Dorsolateral prefrontal cortex (tissue), 120 donors: ENCODE measurements at regions of chr13 and their contacts with region 1.

Region 1: DNA sequence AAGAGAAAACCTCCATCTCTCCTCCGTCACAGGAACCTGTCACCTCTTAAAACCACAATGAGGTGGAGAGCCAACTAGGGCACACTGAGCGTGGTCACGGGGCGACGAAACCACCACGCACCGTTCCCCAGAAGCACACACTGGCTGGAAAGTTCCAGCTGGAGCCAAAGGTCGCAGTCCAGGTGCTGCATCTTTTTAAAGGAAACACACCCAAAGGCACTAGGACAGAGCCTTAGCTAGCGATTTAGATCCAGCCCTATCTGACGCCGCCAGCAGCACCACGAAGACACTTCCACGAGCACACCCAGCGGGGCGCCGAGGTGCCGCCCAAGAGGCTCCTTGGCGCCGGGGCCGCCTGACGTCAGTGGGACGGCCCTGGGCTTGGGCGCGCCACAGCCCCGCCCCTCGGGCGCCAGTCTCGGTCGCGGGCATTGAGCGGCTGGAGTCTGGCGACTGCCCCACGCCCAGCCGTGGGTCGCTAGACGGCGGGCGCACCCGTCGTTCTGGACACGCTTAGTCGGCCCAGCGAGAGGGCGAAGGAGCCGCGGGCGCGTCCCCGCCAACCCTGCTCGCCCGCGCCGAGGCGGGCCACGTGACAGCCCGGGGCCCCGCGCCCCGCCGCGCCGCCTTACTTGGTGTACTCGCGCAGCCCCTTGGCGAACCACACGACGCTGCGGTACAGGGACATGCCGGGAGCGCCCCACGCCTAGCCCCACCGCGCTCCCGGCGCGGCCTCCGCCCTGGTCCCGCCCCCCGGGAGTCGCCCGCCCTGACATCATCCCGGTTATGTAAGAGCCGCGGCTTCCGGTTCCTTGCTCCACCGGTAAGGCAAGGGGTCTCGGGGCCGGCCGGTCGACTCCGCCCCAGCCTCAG is at the start of gene DHRS12:
- DNase-seq: peak; percentile 80 to 93 (median 89)
- H3K4me3 ChIP-seq: peak within 1 kb of the TSS; percentile 57 to 96 (median 84)
- H3K27ac ChIP-seq: peak within 1 kb of the TSS; percentile 95 to 100 (median 99)
- H3K27me3 ChIP-seq: no peaks in the 10 kb centered on the region
- CTCF ChIP-seq: peak in 20 of 56 donors; percentile 4 to 47 (median 15)
- total RNA-seq, gene DHRS12: 4.6 to 21.3 (median 12.8) TPM

Region 2: GRCh38 chr13:51222037-51222685 is 581.5 kb before region 1 on chr13 and contains the start of gene FAM124A:
- intact Hi-C with region 1: loop called in 1 of 2 experiments (anchors 10 kb)
- DNase-seq: peak in 6 of 10 donors; percentile 51 to 83 (median 64)
- H3K4me3 ChIP-seq: peak within 1 kb of the TSS; percentile 60 to 98 (median 88)
- H3K27ac ChIP-seq: peak within 1 kb of the TSS; percentile 75 to 100 (median 93)
- H3K27me3 ChIP-seq: no peaks in the 10 kb centered on the region
- CTCF ChIP-seq: peak in 27 of 56 donors; percentile 1 to 63 (median 34)
- total RNA-seq, gene FAM124A: 15.1 to 107 (median 29.8) TPM

Region 3: DNA sequence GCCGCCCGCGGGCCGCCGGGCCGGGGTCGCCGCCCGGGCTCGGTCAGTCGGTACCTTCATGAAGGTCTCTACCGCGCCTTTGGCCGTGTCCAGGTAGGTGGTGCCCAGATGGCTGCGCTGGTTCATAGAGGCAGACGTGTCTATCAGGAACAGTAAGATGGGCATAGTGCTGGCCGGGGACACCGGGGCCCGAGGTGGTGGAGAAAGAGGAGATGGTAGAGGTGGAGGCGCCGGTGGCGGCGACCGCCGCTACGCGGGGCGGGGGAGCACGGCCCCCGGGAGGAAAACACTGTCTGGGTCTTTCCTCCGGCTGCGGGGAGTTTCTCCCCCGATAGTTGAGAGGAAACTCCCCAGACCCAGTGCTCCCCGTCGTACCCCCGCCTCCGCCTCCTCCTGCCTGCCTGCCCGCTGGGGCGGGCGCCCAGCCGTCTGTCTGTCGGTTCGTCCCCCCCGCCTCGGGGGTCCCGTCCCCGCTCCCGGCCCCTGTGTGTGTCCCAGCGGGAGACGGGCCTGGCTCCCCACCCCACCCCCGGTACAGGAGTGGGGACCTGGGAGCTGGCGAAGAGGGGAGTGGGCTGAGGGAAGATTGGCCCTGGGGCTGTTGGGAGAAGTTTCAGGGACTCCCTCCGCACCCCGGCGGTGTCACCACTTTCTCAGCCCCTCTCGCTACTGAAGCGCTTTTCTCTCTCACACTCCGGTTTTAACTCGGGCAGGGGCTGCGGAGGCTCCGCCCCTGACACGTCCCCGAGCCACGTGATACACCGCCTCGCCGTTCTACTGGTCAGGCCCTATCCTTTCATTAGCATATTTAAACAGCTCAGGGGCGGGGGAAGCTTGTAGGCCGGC is 351.1 kb before region 1 on chr13 and contains the start of gene INTS6:
- intact Hi-C with region 1: loop called (anchors 2 to 5 kb)
- DNase-seq: peak in 9 of 10 donors; percentile 100
- H3K4me3 ChIP-seq: peak within 1 kb of the TSS; percentile 76 to 96 (median 90)
- H3K27ac ChIP-seq: peak within 1 kb of the TSS; percentile 89 to 100 (median 99)
- H3K27me3 ChIP-seq: no peaks in the 10 kb centered on the region
- CTCF ChIP-seq: peak in 2 of 56 donors; percentile 0 to 9
- total RNA-seq, gene INTS6: 30.1 to 60.5 (median 42.9) TPM

Region 4: DNA sequence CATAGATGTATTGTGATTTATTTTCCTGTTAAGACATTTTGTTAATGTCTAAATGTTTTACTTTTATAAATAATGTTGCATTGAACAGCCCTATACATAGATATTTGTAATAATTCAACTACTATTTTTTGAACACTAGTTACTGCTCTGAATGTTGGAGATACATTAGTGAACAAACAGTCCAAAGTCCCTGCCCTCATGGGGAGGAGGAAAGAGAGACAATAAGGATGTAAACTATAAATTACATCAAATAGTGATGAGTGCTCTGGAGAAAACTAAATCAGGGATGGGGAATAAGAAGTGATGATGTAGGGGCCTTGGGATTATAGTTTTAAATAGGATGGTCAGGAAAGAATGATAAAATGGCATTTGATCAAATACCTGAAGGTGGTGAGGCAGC is 338.5 kb before region 1 on chr13:
- intact Hi-C with region 1: no loop called
- DNase-seq: no peak
- H3K4me3 ChIP-seq: no peak overlapping the region
- H3K27ac ChIP-seq: no peak overlapping the region
- H3K27me3 ChIP-seq: no peaks in the 10 kb centered on the region
- CTCF ChIP-seq: no peak

Region 5: DNA sequence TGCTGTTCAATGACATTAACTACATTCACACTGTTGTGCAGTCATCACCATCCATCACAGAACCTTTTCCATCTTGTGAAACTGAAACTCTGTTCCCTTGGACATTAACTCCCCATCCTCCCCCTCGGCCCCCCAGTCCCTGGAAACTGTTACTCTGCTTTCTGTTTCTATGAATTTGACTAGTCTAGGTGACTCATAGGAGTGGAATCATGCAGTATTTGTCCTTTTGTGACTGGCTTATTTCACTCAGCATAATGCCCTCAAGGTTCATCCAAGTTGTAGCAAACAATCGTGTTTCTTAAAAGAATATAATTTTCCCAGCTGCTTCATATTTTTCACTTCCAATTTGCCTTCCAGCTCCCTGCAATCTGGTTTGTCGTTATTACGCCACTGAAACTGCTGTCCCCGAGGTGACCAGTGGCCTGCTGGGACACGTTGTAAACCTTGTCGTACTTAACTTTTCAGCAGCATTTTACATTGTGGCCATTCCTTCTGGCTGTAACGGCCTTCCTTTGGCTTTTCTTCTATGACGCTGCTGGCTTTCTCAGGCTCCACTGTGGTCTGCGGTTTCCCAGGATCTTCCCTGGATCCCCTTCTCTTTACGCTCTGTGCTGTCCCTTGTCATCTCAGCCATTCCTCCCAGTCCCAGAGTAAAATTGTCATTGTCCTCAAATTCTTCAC is 73.7 kb before region 1 on chr13:
- intact Hi-C with region 1: loop called (anchors 5 to 10 kb)
- DNase-seq: no peak
- H3K4me3 ChIP-seq: no peak overlapping the region
- H3K27ac ChIP-seq: peak overlapping the region in 40 of 59 donors; percentile 11 to 93 (median 60)
- H3K27me3 ChIP-seq: no peaks in the 10 kb centered on the region
- CTCF ChIP-seq: no peak

Region 6: GRCh38 chr13:52011632-52012511 is 208.2 kb after region 1 on chr13 and contains the start of gene ALG11:
- intact Hi-C with region 1: loop called in 1 of 2 experiments (anchors 5 kb)
- DNase-seq: peak; percentile 99 to 100 (median 99)
- H3K4me3 ChIP-seq: peak within 1 kb of the TSS; percentile 64 to 100 (median 92)
- H3K27ac ChIP-seq: peak within 1 kb of the TSS in 53 of 59 donors; percentile 2 to 85 (median 70)
- H3K27me3 ChIP-seq: no peaks in the 10 kb centered on the region
- CTCF ChIP-seq: peak in 26 of 56 donors; percentile 2 to 49 (median 22)
- total RNA-seq, gene ALG11: 21.8 to 45.8 (median 34.2) TPM